MCF 10A (cell line): ENCODE measurements at regions of chr1 and their contacts with region 1.

Region 1: DNA sequence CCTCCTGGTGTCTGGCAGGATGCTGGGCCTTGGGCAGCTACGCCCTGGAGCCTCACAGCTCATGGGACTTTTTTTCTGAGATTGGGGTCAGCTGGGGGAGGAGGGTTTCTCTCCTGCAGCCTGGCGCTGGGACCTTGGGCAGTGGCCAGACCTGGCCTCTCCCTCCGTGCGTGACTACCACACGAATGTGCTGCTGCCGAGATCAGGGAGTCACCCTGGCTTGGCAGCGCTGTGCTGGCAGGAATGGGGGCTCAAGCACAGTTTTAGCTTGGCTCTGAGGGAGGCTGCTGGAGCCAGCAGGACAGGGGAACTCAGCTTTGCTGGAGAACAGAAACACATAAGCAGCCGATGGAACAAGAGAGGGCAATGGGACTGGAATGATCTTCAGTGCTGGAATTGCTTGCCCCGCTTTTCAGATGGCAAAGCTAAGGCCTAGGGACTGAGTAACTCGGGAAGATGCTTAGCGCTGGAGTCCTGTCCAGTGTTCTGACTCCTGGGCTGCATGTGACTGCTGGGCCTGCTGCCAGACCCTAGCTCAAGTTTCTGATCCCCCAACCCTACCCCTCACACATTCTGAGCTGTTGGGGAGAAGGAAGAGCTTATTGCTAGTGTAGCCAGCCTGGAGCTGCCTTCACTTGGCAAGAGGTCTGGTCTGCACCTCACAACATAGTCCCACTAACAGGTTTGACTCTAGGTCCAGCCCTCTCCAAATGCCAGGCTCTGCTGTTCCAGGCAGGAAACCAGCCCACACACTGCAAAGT is 69.9 kb downstream of the NAV1 start:
- DNase-seq: no peak
- H3K4me3 Mint-ChIP-seq: no peak overlapping the region
- H3K27ac Mint-ChIP-seq: no peak overlapping the region
- H3K4me1 Mint-ChIP-seq: no peaks in the 10 kb centered on the region
- H3K27me3 Mint-ChIP-seq: no peaks in the 10 kb centered on the region
- CTCF ChIP-seq: no peak

Region 2: GRCh38 chr1:201488817-201489589 is 119.8 kb before region 1 on chr1:
- CTCF ChIA-PET with region 1: no interaction called
- POLR2A ChIA-PET with region 1: no interaction called
- intact Hi-C with region 1: no loop called
- DNase-seq: peak; percentile 100
- H3K4me3 Mint-ChIP-seq: peak overlapping the region; percentile 40
- H3K27ac Mint-ChIP-seq: peak overlapping the region; percentile 95
- H3K4me1 Mint-ChIP-seq: peaks cover 54% of the 10 kb centered on the region
- H3K27me3 Mint-ChIP-seq: no peaks in the 10 kb centered on the region
- CTCF ChIP-seq: no peak

Region 3: GRCh38 chr1:201619513-201619912 is 10.7 kb after region 1 on chr1:
- CTCF ChIA-PET with region 1: interaction called, 10 read pairs
- POLR2A ChIA-PET with region 1: interaction called, 3 read pairs
- intact Hi-C with region 1: no loop called
- DNase-seq: no peak
- H3K4me3 Mint-ChIP-seq: no peak overlapping the region
- H3K27ac Mint-ChIP-seq: no peak overlapping the region
- H3K4me1 Mint-ChIP-seq: peaks cover 23% of the 10 kb centered on the region
- H3K27me3 Mint-ChIP-seq: no peaks in the 10 kb centered on the region
- CTCF ChIP-seq: no peak

Region 4: GRCh38 chr1:201807958-201808632 is 199.3 kb after region 1 on chr1:
- CTCF ChIA-PET with region 1: no interaction called
- POLR2A ChIA-PET with region 1: no interaction called
- intact Hi-C with region 1: no loop called
- DNase-seq: no peak
- H3K4me3 Mint-ChIP-seq: no peak overlapping the region
- H3K27ac Mint-ChIP-seq: no peak overlapping the region
- H3K4me1 Mint-ChIP-seq: no peaks in the 10 kb centered on the region
- H3K27me3 Mint-ChIP-seq: no peaks in the 10 kb centered on the region
- CTCF ChIP-seq: no peak